ENCODE measurements at regions of chr16 and their contacts with region 1.

Region 1: GRCh38 chr16:65671-66137 is 6.7 kb downstream of the RHBDF1 start:
- DNase-seq: peak; percentile 87
- H3K4me3 Mint-ChIP-seq: no peak overlapping the region
- H3K27ac Mint-ChIP-seq: no peak overlapping the region
- H3K4me1 Mint-ChIP-seq: peaks cover 2% of the 10 kb centered on the region
- H3K27me3 Mint-ChIP-seq: peaks cover 7% of the 10 kb centered on the region

Region 2: GRCh38 chr16:47234-47633 is 18.5 kb before region 1 on chr16:
- CTCF ChIA-PET with region 1: interaction called, 10 read pairs
- POLR2A ChIA-PET with region 1: no interaction called
- DNase-seq: no peak
- H3K4me3 Mint-ChIP-seq: no peak overlapping the region
- H3K27ac Mint-ChIP-seq: no peak overlapping the region
- H3K4me1 Mint-ChIP-seq: peaks cover 34% of the 10 kb centered on the region
- H3K27me3 Mint-ChIP-seq: no peaks in the 10 kb centered on the region

Region 3: GRCh38 chr16:53346-54236 is 12.1 kb before region 1 on chr16 and contains the starts of genes POLR3K and SNRNP25:
- CTCF ChIA-PET with region 1: interaction called, 17 read pairs
- POLR2A ChIA-PET with region 1: interaction called, 3 read pairs
- DNase-seq: peak; percentile 99
- H3K4me3 Mint-ChIP-seq: peak within 1 kb of the TSS; percentile 97
- H3K27ac Mint-ChIP-seq: peak within 1 kb of the TSS; percentile 92
- H3K4me1 Mint-ChIP-seq: peaks cover 38% of the 10 kb centered on the region
- H3K27me3 Mint-ChIP-seq: no peaks in the 10 kb centered on the region
- total RNA-seq, gene POLR3K: 31.5 to 35.8 TPM
- total RNA-seq, gene SNRNP25: 41.1 to 45.6 TPM

Region 4: GRCh38 chr16:77807-78443 is 12.2 kb after region 1 on chr16 and contains the start of gene MPG:
- CTCF ChIA-PET with region 1: interaction called, 26 read pairs
- POLR2A ChIA-PET with region 1: no interaction called
- DNase-seq: peak; percentile 86
- H3K4me3 Mint-ChIP-seq: peak within 1 kb of the TSS; percentile 85
- H3K27ac Mint-ChIP-seq: peak within 1 kb of the TSS; percentile 86
- H3K4me1 Mint-ChIP-seq: peaks cover 35% of the 10 kb centered on the region
- H3K27me3 Mint-ChIP-seq: peaks cover 22% of the 10 kb centered on the region
- total RNA-seq, gene MPG: 47.2 to 52.6 TPM

Region 5: DNA sequence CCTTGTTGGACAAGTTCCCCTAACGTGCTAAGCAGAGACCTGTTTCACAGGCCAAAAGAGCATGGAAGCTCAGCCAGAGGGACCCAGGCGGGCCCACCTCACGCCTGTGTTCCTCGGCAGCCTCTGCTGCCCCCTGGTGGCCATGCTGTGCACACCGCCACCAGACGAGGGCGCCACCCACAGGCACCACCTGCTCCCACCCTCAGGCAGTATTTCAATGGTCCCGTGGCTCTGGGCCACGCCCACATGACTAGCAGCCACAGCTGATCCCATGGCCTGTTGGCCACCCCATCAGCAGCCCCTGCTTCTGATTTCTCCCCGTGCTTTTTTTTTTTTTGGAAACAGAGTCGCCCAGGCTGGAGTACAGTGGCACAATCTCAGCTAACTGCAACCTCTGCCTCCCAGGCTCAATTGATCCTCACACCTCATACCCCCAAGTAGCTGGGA is 31.3 kb after region 1 on chr16:
- CTCF ChIA-PET with region 1: interaction called, 169 read pairs
- POLR2A ChIA-PET with region 1: no interaction called
- DNase-seq: peak; percentile 90
- H3K4me3 Mint-ChIP-seq: no peak overlapping the region
- H3K27ac Mint-ChIP-seq: no peak overlapping the region
- H3K4me1 Mint-ChIP-seq: peaks cover 8% of the 10 kb centered on the region
- H3K27me3 Mint-ChIP-seq: no peaks in the 10 kb centered on the region

Region 6: GRCh38 chr16:106623-107324 is 41.1 kb after region 1 on chr16:
- CTCF ChIA-PET with region 1: interaction called, 12 read pairs
- POLR2A ChIA-PET with region 1: no interaction called
- DNase-seq: peak; percentile 69
- H3K4me3 Mint-ChIP-seq: no peak overlapping the region
- H3K27ac Mint-ChIP-seq: no peak overlapping the region
- H3K4me1 Mint-ChIP-seq: peaks cover 2% of the 10 kb centered on the region
- H3K27me3 Mint-ChIP-seq: no peaks in the 10 kb centered on the region